CD4-positive, alpha-beta memory T cell (primary cell): ENCODE measurements at regions of chr3 and their contacts with region 1.

Region 1: GRCh38 chr3:146189519-146190173 is 28.7 kb upstream of the PLOD2 start:
- DNase-seq: peak in 4 of 5 donors; percentile 9 to 30 (median 14)
- H3K4me3 ChIP-seq: no peak overlapping the region
- H3K4me3 Mint-ChIP-seq: no peak overlapping the region
- H3K27ac ChIP-seq: no peak overlapping the region
- H3K27ac Mint-ChIP-seq: no peak overlapping the region
- H3K4me1 ChIP-seq: no peaks in the 10 kb centered on the region
- H3K4me1 Mint-ChIP-seq: peaks cover 0 to 4% (median 2%) of the 10 kb centered on the region in 4 donors
- H3K27me3 ChIP-seq: no peaks in the 10 kb centered on the region
- H3K27me3 Mint-ChIP-seq: peaks cover 3 to 5% of the 10 kb centered on the region in 2 donors

Region 2: DNA sequence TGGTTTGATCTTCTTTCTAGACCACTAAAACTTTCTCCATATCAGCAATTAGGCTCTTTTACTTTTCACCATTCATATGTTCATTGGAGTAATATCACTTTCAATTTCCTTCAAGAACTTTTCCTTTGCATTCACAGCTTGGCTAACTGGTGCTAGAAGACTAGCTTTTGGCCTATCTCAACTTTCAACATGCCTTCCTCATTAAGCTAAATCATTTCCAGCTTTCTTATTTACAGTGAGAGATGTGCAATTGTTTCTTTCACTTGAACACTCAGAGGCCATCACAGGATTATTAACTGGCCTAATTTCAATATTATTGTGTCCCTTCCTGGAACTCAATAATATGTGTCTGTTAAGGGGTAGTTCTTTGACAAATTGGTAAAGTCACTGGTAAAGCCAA is 14.1 kb after region 1 on chr3:
- CTCF ChIA-PET with region 1: interaction called, 13 read pairs
- POLR2A ChIA-PET with region 1: no interaction called
- intact Hi-C with region 1: no loop called
- DNase-seq: no peak
- H3K4me3 ChIP-seq: no peak overlapping the region
- H3K4me3 Mint-ChIP-seq: no peak overlapping the region
- H3K27ac ChIP-seq: no peak overlapping the region
- H3K27ac Mint-ChIP-seq: no peak overlapping the region
- H3K4me1 ChIP-seq: no peaks in the 10 kb centered on the region
- H3K4me1 Mint-ChIP-seq: no peaks in the 10 kb centered on the region
- H3K27me3 ChIP-seq: no peaks in the 10 kb centered on the region
- H3K27me3 Mint-ChIP-seq: peaks cover 0 to 2% of the 10 kb centered on the region in 2 donors

Region 3: GRCh38 chr3:146577662-146578061 is 388.0 kb after region 1 on chr3:
- CTCF ChIA-PET with region 1: interaction called, 37 read pairs
- POLR2A ChIA-PET with region 1: no interaction called
- intact Hi-C with region 1: loop called (anchors 1 kb)
- DNase-seq: peak in 4 of 5 donors; percentile 27 to 35 (median 29)
- H3K4me3 ChIP-seq: no peak overlapping the region
- H3K4me3 Mint-ChIP-seq: no peak overlapping the region
- H3K27ac ChIP-seq: no peak overlapping the region
- H3K27ac Mint-ChIP-seq: no peak overlapping the region
- H3K4me1 ChIP-seq: no peaks in the 10 kb centered on the region
- H3K4me1 Mint-ChIP-seq: no peaks in the 10 kb centered on the region
- H3K27me3 ChIP-seq: no peaks in the 10 kb centered on the region
- H3K27me3 Mint-ChIP-seq: no peaks in the 10 kb centered on the region

Region 4: DNA sequence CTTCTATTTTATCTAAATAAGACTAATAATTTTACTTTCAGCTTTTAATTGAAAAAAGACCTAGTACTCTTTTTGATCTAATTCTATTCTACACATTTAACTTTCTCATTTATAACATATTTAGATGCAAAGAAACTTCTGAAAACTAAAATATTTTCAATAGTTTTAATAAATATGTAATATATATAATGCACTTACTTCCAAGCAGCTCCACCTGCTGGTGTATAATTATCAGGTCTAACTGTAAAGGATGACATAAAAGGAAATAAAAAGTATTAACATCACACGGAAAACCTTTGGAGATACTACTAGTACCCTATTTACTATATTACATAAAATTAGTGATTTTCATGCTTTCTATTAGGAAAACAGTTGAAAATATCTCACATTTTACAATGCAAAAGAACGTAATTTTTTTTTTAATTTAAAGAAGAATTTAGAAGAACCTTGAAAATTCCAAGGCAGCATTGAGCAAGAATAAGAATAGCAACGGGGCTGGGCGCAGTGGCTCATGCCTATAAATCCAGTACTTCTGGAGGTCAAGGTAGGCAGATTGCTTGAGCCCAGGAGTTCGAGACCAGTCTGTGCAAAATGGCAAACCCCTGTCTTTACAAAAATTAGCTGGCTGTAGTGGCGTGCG is 405.3 kb after region 1 on chr3:
- CTCF ChIA-PET with region 1: interaction called, 5 read pairs
- POLR2A ChIA-PET with region 1: no interaction called
- intact Hi-C with region 1: loop called (anchors 1 kb)
- DNase-seq: peak in 3 of 5 donors; percentile 2
- H3K4me3 ChIP-seq: no peak overlapping the region
- H3K4me3 Mint-ChIP-seq: no peak overlapping the region
- H3K27ac ChIP-seq: no peak overlapping the region
- H3K27ac Mint-ChIP-seq: no peak overlapping the region
- H3K4me1 ChIP-seq: no peaks in the 10 kb centered on the region
- H3K4me1 Mint-ChIP-seq: no peaks in the 10 kb centered on the region
- H3K27me3 ChIP-seq: no peaks in the 10 kb centered on the region
- H3K27me3 Mint-ChIP-seq: peaks cover 2 to 4% of the 10 kb centered on the region in 2 donors

Region 5: GRCh38 chr3:146759256-146759655 is 569.6 kb after region 1 on chr3:
- CTCF ChIA-PET with region 1: no interaction called
- POLR2A ChIA-PET with region 1: no interaction called
- intact Hi-C with region 1: no loop called
- DNase-seq: no peak
- H3K4me3 ChIP-seq: no peak overlapping the region
- H3K4me3 Mint-ChIP-seq: no peak overlapping the region
- H3K27ac ChIP-seq: no peak overlapping the region
- H3K27ac Mint-ChIP-seq: no peak overlapping the region
- H3K4me1 ChIP-seq: no peaks in the 10 kb centered on the region
- H3K4me1 Mint-ChIP-seq: no peaks in the 10 kb centered on the region
- H3K27me3 ChIP-seq: no peaks in the 10 kb centered on the region
- H3K27me3 Mint-ChIP-seq: no peaks in the 10 kb centered on the region